Endothelial cell of umbilical vein (primary cell): ENCODE measurements at regions of chr18 and their contacts with region 1.

Region 1: DNA sequence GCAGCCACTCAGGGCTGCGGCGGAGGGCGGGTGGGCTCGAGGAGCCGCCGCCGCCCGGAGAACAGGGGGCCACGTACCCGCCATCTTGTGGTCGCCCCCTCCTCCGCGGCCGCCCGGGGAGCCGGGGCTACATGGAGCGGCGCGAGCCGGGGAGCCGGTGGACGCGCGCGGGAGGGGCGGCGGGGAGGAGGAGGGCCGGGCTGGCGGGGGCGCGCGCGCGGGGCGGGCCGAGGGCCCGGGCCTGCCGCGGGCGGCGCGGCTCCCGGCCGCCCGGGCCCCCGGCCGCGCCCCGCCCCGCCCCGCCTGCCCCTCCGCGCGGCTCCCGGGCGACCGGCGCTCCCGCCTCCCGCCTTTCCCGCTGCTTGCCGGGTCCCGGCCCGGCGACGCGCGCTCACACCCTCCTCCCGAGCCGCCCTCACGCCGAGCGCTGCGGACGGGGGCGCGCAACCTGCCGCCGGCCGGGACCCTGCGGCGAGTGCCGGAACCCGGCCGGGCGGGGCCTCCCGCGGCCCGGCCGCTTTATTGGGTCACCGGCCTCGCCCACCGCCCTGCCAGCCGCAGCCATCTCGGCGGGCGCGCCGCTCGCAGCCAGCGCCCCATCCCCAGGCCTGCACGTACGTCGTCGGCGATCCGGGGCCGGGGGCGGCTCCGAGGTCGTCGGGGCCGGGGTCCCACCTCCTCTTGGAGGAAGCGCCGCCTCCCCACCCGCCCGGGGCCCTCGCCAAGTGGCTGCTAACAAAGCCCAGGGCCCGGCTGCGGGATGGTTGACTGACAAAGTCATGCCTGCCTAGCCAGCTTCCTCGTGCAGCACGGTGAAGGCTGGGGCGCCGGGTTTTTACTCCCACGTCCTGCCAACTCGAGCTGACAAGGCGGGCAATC is at the start of gene PPP4R1:
- DNase-seq: peak; percentile 79
- H3K4me3 ChIP-seq: peak within 1 kb of the TSS; percentile 93 to 99 (median 98)
- H3K27ac ChIP-seq: peak within 1 kb of the TSS; percentile 86
- H3K4me1 ChIP-seq: peaks cover 51% of the 10 kb centered on the region
- H3K27me3 ChIP-seq: no peaks in the 10 kb centered on the region
- CTCF ChIP-seq: no peak
- POLR2A ChIP-seq: peak; percentile 59
- total RNA-seq, gene PPP4R1: 152 and 168 TPM in 2 replicates

Region 2: GRCh38 chr18:9643549-9643948 is 28.9 kb after region 1 on chr18:
- CTCF ChIA-PET with region 1: interaction called, 11 read pairs
- POLR2A ChIA-PET with region 1: no interaction called
- dilution Hi-C with region 1: no loop called
- intact Hi-C with region 1: loop called (anchors 1 kb)
- DNase-seq: peak; percentile 92
- H3K4me3 ChIP-seq: no peak overlapping the region
- H3K27ac ChIP-seq: peak overlapping the region; percentile 96
- H3K4me1 ChIP-seq: peaks cover 29% of the 10 kb centered on the region
- H3K27me3 ChIP-seq: no peaks in the 10 kb centered on the region
- CTCF ChIP-seq: no peak
- POLR2A ChIP-seq: no peak

Region 3: DNA sequence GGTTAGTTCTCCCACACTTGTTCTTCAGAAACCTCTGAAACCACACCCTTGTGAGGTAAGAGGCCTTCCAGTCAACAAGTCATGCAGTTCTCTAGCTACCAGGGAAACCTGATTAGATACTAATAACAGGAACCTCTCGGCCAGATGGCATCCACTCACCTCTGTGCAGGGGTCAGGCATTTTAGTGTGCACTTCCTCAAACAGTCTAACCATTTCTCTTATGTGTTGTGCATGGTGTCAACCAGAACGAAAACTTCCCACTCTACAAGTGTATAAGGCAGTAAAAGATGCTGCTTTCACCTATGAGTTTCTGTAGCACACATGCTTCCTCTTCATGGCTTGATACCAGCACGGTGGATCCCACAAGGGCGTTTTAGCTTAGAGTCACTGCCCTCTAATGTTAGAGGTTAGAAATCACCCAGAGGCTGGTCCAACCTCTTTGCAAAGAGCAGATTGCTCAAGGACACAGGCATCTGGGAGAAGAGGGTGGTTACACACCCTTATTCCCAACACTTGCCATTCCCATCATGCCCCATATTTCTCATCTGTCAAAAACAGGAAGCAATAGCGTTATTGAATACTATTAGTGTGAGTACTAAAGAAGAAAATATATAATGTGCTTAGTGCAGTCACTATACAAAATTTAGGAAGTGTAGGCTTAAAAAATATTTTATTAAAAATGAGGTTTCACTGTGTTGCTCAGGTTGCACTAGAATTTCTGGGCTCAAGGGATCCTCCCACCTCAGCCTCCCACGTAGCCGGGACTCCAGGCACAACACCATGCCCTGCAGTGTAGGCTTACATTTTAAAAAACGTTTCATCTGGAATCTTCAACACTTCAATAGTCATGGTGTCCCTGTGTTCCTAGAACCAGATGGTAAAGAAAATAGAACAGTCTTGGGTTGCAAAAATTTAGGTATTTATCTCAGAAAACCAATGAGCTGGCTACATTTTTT is 58.9 kb after region 1 on chr18:
- CTCF ChIA-PET with region 1: interaction called, 35 read pairs
- POLR2A ChIA-PET with region 1: no interaction called
- dilution Hi-C with region 1: no loop called
- intact Hi-C with region 1: loop called (anchors 1 kb)
- DNase-seq: peak; percentile 58
- H3K4me3 ChIP-seq: no peak overlapping the region
- H3K27ac ChIP-seq: no peak overlapping the region
- H3K4me1 ChIP-seq: no peaks in the 10 kb centered on the region
- H3K27me3 ChIP-seq: no peaks in the 10 kb centered on the region
- CTCF ChIP-seq: peak in 1 of 2 donors; percentile 31
- POLR2A ChIP-seq: no peak

Region 4: GRCh38 chr18:9743200-9744016 is 128.8 kb after region 1 on chr18:
- CTCF ChIA-PET with region 1: no interaction called
- POLR2A ChIA-PET with region 1: interaction called, 3 read pairs
- dilution Hi-C with region 1: no loop called
- intact Hi-C with region 1: loop called (anchors 1 kb)
- DNase-seq: peak; percentile 87
- H3K4me3 ChIP-seq: no peak overlapping the region
- H3K27ac ChIP-seq: peak overlapping the region; percentile 83
- H3K4me1 ChIP-seq: peaks cover 37% of the 10 kb centered on the region
- H3K27me3 ChIP-seq: no peaks in the 10 kb centered on the region
- CTCF ChIP-seq: no peak
- POLR2A ChIP-seq: no peak

Region 5: DNA sequence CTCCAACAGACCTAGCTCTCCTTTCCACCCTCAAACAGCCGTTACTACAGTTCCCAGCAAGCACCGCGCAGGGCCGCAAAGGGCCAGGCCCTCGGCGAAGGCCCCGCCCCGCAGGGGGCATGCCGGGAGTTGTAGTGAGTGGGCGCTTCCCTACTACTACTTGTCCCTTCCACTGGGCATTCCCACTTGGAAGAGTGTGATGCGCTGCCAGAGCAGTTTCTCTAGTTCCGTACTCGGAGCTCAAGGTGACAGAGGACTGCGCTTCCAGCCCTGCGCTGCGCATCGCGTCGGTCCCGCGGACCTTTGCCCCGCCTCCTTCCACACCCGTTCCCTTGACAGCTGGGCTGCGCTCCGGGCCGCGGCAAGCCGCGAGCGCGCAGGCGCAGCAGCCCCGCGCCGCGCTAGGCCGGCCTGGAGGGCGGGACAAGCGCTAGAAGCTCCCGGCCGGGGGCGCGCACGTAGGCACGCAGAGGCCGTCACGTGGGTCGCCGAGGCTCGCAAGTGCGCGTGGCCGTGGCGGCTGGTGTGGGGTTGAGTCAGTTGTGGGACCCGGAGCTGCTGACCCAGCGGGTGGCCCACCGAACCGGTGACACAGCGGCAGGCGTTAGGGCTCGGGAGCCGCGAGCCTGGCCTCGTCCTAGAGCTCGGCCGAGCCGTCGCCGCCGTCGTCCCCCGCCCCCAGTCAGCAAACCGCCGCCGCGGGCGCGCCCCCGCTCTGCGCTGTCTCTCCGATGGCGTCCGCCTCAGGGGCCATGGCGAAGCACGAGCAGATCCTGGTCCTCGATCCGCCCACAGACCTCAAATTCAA is 299.1 kb after region 1 on chr18 and contains the start of gene VAPA:
- CTCF ChIA-PET with region 1: interaction called, 4 read pairs
- POLR2A ChIA-PET with region 1: no interaction called
- dilution Hi-C with region 1: no loop called
- intact Hi-C with region 1: loop called (anchors 2 kb)
- DNase-seq: peak; percentile 99
- H3K4me3 ChIP-seq: peak within 1 kb of the TSS; percentile 78 to 99 (median 89)
- H3K27ac ChIP-seq: peak within 1 kb of the TSS; percentile 94
- H3K4me1 ChIP-seq: peaks cover 38% of the 10 kb centered on the region
- H3K27me3 ChIP-seq: peaks cover 0 to 1% of the 10 kb centered on the region in 2 experiments
- CTCF ChIP-seq: no peak
- POLR2A ChIP-seq: peak; percentile 77
- total RNA-seq, gene VAPA: 163 TPM in 2 replicates

Region 6: GRCh38 chr18:10525371-10526210 is 911.0 kb after region 1 on chr18 and contains the start of gene NAPG:
- CTCF ChIA-PET with region 1: no interaction called
- POLR2A ChIA-PET with region 1: no interaction called
- dilution Hi-C with region 1: no loop called
- intact Hi-C with region 1: loop called (anchors 10 kb)
- DNase-seq: peak; percentile 95
- H3K4me3 ChIP-seq: peak within 1 kb of the TSS; percentile 41 to 98 (median 94)
- H3K27ac ChIP-seq: peak within 1 kb of the TSS; percentile 63
- H3K4me1 ChIP-seq: peaks cover 7% of the 10 kb centered on the region
- H3K27me3 ChIP-seq: peaks cover 10 to 11% of the 10 kb centered on the region in 2 experiments
- CTCF ChIP-seq: no peak
- POLR2A ChIP-seq: peak; percentile 60
- total RNA-seq, gene NAPG: 34.1 and 34.7 TPM in 2 replicates